WTC11 (cell line): ENCODE measurements at regions of chr13 and their contacts with region 1.

Region 1: DNA sequence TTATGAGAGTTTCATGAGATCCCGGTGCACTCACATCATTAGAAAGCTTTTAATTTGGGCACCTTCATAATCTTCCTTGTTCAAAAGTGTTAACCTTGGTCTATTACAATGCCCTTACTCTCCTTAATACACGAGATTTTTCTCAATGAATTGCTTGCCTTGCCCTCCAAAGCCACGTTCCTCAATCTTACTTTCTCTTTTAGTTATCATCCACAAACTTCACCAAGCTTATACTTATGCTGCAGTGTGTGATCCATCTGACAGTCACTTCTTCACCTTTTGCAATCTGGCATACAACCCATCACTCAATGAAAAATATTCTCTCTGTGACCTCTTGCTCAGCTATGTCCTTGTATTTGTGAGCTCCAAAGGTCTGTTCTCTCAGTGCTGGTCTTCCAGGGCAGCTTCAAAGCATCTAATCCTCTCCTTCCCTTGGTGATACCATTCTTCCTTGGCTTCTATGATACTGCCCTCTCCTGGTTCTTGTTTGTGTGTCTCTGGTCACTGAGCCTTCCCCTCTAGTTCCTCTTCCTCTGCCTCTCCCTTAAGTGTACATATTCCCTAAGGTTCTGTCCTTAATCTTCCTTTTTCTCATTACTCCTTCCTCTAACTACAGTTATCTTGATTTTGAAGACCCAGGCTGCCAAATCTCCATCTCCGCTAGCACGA is 202.2 kb upstream of the STARD13 start:
- DNase-seq: no peak
- ATAC-seq: peak; percentile 41
- H3K4me3 Mint-ChIP-seq: no peak overlapping the region
- H3K27ac Mint-ChIP-seq: no peak overlapping the region
- H3K4me1 Mint-ChIP-seq: peaks cover 44% of the 10 kb centered on the region
- H3K27me3 Mint-ChIP-seq: no peaks in the 10 kb centered on the region; the same call in 1 of the 2 replicates
- CTCF ChIP-seq: no peak

Region 2: DNA sequence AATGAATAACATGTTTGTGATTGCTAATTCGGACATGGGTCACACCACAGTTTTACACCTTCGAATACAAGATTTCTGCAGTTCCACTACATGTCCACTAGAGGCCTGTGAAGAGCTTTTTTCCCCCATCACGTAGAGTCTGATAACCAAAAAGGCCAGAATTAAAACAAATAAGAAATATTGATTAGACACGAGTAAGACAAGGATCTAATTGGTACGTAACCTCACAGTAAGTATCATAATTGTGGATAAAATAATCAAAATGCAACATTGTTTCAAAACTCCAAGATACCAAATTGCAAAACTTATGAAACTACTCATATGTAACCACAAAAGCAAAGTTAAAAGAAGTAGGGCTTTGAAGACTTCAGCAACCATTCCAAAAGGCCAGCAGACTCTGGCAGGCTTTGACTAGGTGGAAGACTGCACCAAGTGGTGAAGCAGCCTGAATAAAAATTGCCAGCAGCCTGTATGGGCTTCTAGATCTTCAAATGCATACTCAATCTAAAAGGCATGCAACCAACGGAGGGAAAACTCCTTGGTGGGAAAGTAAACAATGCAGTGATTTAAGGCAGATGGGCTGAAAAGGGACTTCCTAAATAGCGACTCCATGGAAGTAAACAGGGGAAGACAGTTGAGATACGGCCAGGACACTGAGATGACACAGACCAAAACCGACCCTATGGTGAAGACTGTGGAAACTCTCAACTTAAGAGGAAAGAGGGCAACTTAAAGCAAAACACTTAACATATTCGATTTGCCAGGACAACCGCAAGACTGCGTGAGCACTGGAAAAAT is 258.9 kb before region 1 on chr13:
- CTCF ChIA-PET with region 1: interaction called, 10 read pairs
- POLR2A ChIA-PET with region 1: interaction called, 3 read pairs
- DNase-seq: no peak
- ATAC-seq: peak; percentile 69
- H3K4me3 Mint-ChIP-seq: no peak overlapping the region
- H3K27ac Mint-ChIP-seq: peak overlapping the region; percentile 71
- H3K4me1 Mint-ChIP-seq: peaks cover 41% of the 10 kb centered on the region
- H3K27me3 Mint-ChIP-seq: no peaks in the 10 kb centered on the region
- CTCF ChIP-seq: peak; percentile 82

Region 3: DNA sequence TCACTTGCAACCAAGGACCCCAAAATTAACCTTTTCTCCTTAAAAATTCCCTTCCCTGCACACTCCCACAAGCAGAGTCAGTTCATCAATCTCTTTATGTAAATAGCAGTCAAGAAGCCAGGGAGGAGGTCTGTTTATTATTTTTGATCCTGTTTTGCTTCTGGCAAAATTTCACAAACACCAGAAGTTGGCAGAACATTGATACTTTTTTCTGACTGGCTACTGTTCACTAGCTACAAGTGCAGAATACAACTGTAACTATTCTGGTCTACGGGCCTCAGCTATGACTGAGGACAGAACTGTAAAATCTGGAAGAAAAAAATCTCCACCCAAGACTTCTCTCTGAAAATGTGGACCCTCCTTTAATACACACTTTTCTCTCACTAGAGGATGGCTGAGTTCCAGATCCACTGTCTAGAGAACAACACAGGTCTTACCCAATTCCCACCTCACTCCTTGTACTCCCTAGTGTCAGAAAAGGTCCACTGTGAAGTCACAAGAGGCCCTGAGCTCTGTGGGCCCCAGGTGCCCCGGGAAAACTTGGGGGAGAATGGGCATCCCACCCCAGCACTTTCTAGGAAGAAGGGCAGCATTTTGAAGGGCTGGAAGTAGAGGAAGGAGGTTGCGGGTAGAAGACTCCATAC is 216.7 kb before region 1 on chr13:
- CTCF ChIA-PET with region 1: no interaction called
- POLR2A ChIA-PET with region 1: no interaction called
- DNase-seq: no peak
- ATAC-seq: no peak
- H3K4me3 Mint-ChIP-seq: no peak overlapping the region
- H3K27ac Mint-ChIP-seq: no peak overlapping the region
- H3K4me1 Mint-ChIP-seq: peaks cover 18% of the 10 kb centered on the region
- H3K27me3 Mint-ChIP-seq: no peaks in the 10 kb centered on the region
- CTCF ChIP-seq: no peak

Region 4: DNA sequence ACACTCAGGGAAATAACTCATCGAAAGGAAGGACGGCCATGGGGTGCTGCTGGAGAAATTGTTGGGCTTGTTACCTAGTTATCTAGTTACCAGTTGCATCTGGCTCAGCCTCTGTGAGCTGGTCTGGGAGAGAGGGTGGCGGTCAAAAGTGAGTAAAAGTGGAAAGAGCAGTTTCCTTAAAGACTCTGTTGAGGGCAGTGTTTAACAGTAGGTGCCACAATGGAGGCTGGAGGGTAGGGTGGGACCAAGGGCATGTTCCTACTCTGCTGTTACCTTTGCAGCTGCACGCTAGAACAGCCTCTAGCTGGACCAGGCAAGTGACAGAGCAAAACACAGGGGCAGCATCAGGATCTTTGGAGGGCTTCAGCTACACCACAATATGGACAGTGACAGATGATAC is 26.7 kb after region 1 on chr13:
- CTCF ChIA-PET with region 1: interaction called, 11 read pairs
- POLR2A ChIA-PET with region 1: no interaction called
- DNase-seq: peak; percentile 29
- ATAC-seq: peak; percentile 93
- H3K4me3 Mint-ChIP-seq: no peak overlapping the region
- H3K27ac Mint-ChIP-seq: peak overlapping the region; percentile 20
- H3K4me1 Mint-ChIP-seq: peaks cover 32% of the 10 kb centered on the region
- H3K27me3 Mint-ChIP-seq: no peaks in the 10 kb centered on the region
- CTCF ChIP-seq: no peak

Region 5: DNA sequence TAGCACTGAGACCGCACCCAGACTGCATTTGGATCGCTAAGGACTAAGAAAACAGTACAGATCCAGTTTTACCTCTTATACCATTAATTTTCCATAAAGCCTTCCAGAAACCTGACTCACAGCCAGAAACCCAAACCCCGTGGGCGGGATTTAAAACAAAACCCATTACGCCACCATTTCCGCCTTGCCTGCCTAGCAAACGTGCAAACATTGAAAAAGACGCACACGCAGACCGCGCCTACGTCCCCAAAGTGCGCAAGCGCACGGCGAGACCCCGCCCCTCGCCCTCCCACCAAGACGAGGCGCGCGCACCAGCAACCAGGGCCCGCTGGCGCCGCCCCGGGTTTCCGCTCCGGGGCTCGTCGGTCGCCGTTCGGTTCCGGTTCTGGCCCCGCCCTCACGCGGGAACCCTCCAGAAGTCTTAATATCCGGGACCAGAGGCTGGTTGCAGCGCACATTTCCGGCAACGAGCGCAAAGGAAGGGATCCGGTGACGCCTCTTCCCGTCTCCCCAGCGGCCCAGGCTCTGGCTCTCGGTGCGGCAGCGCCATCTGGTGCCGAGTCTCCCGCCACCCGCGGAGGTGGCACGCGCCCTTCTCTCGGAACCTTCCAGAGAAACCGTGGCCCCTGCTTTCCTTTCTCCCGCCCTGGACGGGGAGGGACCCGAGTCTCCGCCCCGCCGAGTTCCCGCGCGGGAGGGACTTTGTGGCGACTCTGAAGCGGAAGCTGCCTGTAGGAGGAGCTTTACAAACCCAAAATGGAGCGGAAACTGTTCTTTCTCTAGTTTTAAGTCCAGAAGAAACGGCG is 54.8 kb after region 1 on chr13:
- CTCF ChIA-PET with region 1: interaction called, 12 read pairs
- POLR2A ChIA-PET with region 1: no interaction called
- DNase-seq: peak; percentile 96
- ATAC-seq: peak; percentile 87
- H3K4me3 Mint-ChIP-seq: peak overlapping the region; percentile 87
- H3K27ac Mint-ChIP-seq: peak overlapping the region; percentile 98
- H3K4me1 Mint-ChIP-seq: peaks cover 59% of the 10 kb centered on the region
- H3K27me3 Mint-ChIP-seq: no peaks in the 10 kb centered on the region
- CTCF ChIP-seq: no peak

Region 6: GRCh38 chr13:33642374-33643068 is 154.8 kb after region 1 on chr13:
- CTCF ChIA-PET with region 1: no interaction called
- POLR2A ChIA-PET with region 1: no interaction called
- DNase-seq: no peak
- ATAC-seq: peak; percentile 54
- H3K4me3 Mint-ChIP-seq: no peak overlapping the region
- H3K27ac Mint-ChIP-seq: no peak overlapping the region
- H3K4me1 Mint-ChIP-seq: peaks cover 52% of the 10 kb centered on the region
- H3K27me3 Mint-ChIP-seq: 0 out of 2 replicates have a peak, but pooled peaks cover 4% of the 10 kb centered on the region
- CTCF ChIP-seq: no peak